ENCODE measurements at regions of chr12 and their contacts with region 1.

Region 1: DNA sequence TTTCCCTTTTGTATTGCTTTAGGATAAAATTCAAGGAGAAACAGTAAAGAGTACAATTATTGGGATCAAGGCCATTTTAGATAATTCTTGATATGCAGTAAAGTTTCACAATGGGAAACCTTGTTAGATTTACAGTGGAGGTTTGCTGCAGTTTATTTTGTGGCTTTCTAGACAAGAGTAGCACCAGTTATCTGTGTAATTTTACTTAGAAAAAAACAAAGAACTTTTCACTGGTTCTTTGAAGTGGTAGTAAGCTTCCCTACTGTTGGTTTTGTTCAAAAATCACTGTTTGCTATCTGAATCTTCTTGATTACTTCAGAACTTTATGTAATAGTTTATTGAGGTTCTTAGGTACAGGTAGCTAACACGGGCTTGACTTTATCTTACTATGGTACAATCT is 42.0 kb downstream of the ADIPOR2 start:
- DNase-seq: no peak
- H3K4me3 Mint-ChIP-seq: no peak overlapping the region
- H3K27ac Mint-ChIP-seq: no peak overlapping the region
- H3K4me1 Mint-ChIP-seq: peaks cover 34% of the 10 kb centered on the region
- H3K27me3 Mint-ChIP-seq: no peaks in the 10 kb centered on the region

Region 2: DNA sequence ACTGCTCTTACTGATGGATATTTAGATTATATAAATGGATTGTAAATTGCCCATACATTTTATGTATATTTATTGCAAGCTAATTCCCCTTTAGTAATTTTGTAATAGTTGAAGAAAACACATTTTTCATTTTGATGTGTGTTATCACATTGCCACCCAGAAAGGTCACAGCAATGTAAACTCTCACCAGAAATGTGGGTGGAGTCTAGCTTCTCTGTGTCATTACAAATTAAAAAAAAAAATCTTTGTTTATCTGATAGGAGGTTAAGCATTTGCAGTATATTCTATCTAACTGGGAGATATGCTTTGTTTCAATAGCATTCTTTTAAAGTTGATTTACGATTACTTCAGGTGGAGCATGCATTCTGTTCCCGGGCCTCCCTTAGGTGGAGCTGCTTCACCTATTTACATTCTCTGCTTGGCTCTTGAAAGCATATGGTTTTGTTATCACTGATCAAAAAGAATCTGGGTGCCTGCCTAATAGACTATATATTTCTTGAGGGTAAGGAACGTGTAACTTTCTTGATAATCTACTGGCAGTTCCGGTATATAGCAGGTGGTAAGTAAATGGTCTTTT is 34.2 kb before region 1 on chr12:
- CTCF ChIA-PET with region 1: no interaction called
- intact Hi-C with region 1: loop called (anchors 5 kb)
- DNase-seq: peak; percentile 10
- H3K4me3 Mint-ChIP-seq: no peak overlapping the region
- H3K27ac Mint-ChIP-seq: no peak overlapping the region
- H3K4me1 Mint-ChIP-seq: peaks cover 66% of the 10 kb centered on the region
- H3K27me3 Mint-ChIP-seq: no peaks in the 10 kb centered on the region

Region 3: DNA sequence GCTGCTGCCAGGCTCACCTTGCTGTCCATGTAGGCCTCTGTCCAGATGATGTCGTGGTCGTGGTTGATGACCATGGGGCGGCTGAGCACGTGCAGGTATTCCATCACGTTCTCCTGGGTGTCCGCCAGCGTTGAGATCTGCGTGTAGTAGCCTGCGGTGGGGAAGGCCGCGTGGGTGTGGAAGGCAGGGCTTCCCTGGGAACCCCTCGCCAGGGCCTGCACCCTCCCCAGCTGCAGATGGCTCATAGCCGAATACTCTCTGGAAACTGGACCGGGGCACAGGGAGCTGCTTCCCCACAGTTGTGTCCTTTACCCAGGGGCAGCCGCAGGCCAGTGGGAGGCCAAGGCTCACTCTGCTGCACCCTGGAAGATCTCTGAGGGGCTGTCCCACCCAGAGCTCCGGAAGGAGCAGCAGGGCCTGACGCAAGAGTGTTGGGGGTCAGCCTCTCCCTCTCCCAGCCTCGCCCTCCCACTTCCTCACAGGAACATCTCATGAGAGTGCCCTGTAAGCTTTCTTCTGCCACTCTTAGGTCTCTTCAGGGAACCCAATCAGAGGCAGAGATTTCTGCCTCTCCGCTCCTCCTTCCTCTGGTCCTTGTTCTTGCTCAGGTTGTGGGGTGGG is 150.0 kb after region 1 on chr12:
- CTCF ChIA-PET with region 1: no interaction called
- intact Hi-C with region 1: no loop called
- DNase-seq: no peak
- H3K4me3 Mint-ChIP-seq: no peak overlapping the region
- H3K27ac Mint-ChIP-seq: no peak overlapping the region
- H3K4me1 Mint-ChIP-seq: no peaks in the 10 kb centered on the region
- H3K27me3 Mint-ChIP-seq: no peaks in the 10 kb centered on the region